HepG2 (cell line): ENCODE measurements at regions of chr1 and their contacts with region 1.

Region 1: DNA sequence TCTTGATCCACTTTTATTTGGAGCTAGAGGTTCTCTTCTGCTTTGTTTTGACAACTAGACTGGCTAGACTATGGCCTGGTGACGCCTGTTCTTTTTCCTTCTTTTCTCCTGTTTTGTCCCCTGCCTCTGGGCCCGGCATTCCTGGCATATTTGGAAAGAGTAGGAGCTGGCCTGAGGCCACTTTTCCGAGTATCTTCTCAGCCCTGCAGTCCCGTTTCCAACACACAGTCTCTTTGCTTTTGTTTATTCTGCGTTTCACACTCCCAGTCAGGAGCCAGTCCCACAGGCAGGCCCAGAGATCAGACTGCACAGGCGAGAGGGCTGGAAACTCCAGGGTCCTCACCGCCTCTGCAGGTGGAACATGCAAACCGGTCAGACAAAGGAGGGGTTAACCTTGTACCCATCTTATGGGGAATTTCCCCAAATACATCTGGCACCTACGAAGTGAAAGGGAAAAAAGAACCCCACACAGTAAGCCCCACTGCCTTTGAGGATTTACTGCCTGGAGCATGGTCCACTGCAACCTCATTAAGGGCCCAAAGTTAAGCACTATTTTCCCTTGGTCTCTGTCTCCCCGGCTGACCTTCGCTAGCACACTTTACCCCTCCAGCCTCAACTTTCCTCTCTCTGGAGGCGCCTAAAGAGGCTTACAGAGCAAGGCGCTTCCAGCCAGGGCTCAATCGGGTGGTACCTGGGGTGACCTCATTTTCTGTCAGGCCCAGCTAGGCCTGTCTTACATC is 141.1 kb downstream of the TOMM20 start:
- DNase-seq: peak; percentile 95
- ATAC-seq: peak; percentile 97
- H3K4me3 ChIP-seq: peak overlapping the region; percentile 13 to 53 (median 24); a peak in 4 of 6 replicates
- H3K27ac ChIP-seq: peak overlapping the region; percentile 95
- H3K4me1 ChIP-seq: peaks cover 93% of the 10 kb centered on the region
- H3K27me3 ChIP-seq: no peaks in the 10 kb centered on the region
- CTCF ChIP-seq: 0 out of 2 replicates have a peak, but pooled peaks have one; percentile 9
- EP300 ChIP-seq: peak; percentile 62 to 68; a peak in 2 of 4 replicates
- POLR2A ChIP-seq: peak; percentile 55 to 80; a peak in 3 of 4 replicates
- RAD21 ChIP-seq: 0 out of 2 replicates have a peak, but pooled peaks have one; percentile 19

Region 2: DNA sequence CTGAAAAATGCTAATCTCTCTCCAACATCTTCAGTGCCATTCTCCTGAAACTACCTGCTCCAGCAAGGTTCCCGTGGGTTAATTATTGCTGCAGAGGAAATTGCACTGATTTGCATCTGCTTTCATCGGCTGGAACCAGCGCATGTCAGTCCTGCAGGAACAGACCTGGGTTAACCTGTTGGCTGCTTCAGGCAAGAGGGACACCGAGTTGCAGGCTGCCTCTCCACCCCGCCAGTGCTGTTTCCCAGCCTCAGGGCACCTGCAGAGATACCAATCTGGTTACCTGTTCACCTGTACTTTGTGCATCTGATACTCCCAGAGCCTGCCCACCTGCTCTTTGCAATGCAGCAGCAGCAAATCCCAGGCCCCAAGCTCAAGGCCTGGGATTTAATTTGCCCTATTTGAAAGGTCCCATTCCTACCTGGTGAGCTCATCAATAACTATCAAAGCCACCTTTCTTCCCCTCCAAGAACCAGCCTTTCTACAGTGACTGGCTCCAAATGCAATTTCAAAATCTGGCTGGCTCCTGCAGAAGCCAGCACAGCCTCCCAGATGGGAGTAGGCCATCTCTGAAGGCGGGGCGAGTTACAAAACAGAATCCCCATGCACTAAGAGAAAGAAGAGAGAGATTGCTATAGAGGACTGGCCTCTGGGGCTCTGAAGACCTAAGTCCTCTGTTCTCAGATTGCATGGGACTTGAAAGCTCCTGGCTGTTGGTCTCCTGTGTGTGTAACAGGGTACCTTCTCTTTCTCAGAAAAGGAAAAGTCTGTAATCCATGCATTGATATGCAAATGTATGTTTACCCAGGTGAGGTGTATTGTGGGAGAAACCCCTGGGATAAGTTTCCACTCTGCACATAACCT is 73.3 kb after region 1 on chr1:
- CTCF ChIA-PET with region 1: no interaction called
- POLR2A ChIA-PET with region 1: interaction called, 12 read pairs
- in situ Hi-C with region 1: no loop called
- intact Hi-C with region 1: no loop called
- DNase-seq: peak; percentile 81
- ATAC-seq: peak; percentile 31
- H3K4me3 ChIP-seq: no peak overlapping the region
- H3K27ac ChIP-seq: peak overlapping the region; percentile 82
- H3K4me1 ChIP-seq: peaks cover 64% of the 10 kb centered on the region
- H3K27me3 ChIP-seq: no peaks in the 10 kb centered on the region
- CTCF ChIP-seq: no peak
- EP300 ChIP-seq: no peak
- POLR2A ChIP-seq: peak in 1 of 2 experiments; percentile 50; a peak in 2 of 4 replicates
- RAD21 ChIP-seq: no peak

Region 3: GRCh38 chr1:235067263-235068172 is 79.9 kb after region 1 on chr1:
- CTCF ChIA-PET with region 1: no interaction called
- POLR2A ChIA-PET with region 1: interaction called, 40 read pairs
- in situ Hi-C with region 1: no loop called
- intact Hi-C with region 1: no loop called
- DNase-seq: peak; percentile 58
- ATAC-seq: peak; percentile 4; the same call in 2 of the 3 replicates
- H3K4me3 ChIP-seq: peak overlapping the region; percentile 41 to 76 (median 60); a peak in 5 of 6 replicates
- H3K27ac ChIP-seq: peak overlapping the region; percentile 86
- H3K4me1 ChIP-seq: peaks cover 97% of the 10 kb centered on the region
- H3K27me3 ChIP-seq: no peaks in the 10 kb centered on the region
- CTCF ChIP-seq: no peak
- EP300 ChIP-seq: no peak
- POLR2A ChIP-seq: peak in 1 of 2 experiments; percentile 21; a peak in 2 of 4 replicates
- RAD21 ChIP-seq: no peak